Prostate gland (tissue), 2 donors: ENCODE measurements at regions of chr19 and their contacts with region 1.

Region 1: DNA sequence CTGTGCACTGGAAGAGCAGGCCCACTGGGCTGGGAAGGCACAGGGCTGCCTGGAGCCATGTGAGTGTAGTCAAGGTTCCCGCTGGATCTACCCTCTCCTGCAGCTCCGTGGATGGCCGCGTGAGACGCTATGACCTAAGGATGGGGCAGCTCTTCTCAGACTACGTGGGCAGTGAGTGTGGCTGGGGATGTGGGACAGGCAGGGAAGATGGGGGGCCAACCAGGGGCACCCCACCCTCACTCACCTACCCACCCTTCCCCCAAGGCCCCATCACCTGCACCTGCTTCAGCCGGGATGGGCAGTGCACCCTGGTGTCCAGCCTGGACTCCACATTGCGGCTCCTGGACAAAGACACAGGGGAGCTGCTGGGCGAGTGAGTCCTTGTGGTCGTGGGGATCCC is 6.1 kb downstream of the WDR83 start:
- DNase-seq: no peak
- H3K4me3 ChIP-seq: no peak overlapping the region
- H3K27ac ChIP-seq: no peak overlapping the region
- H3K4me1 ChIP-seq: peaks cover 15% of the 10 kb centered on the region
- H3K27me3 ChIP-seq: no peaks in the 10 kb centered on the region
- CTCF ChIP-seq: no peak
- POLR2A ChIP-seq: no peak

Region 2: DNA sequence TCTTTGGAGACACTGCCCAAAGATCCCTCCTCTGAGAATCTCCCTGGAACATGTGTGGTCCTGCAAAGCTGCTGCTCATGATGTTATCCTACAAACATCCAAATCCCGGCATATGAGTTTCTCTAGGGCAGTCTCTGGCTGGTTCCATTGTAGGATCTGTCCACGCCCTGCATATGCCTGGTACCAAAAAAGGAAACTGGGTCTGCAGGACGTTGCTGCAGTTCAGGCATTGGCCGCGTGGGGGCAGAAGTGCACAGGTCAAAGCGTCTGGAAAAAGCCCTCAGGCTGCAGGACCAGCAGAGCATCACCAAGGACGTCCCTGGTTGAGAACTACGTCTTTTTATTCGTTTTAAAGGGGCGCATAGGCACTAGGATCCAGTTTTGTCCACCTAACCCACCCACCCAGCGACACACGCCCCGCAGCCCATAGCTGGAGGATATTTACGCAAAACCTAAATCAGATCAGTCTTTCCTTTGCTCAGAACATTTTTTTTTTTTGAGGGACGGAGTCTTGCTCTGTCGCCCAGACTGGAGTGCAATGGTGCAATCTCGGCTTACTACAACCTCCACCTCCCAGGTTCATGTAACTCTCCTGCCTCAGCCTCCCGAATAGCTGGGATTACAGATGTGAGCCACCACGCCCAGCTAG is 108.6 kb before region 1 on chr19:
- intact Hi-C with region 1: loop called (anchors 2 kb)
- DNase-seq: peak; percentile 84
- H3K4me3 ChIP-seq: no peak overlapping the region
- H3K27ac ChIP-seq: no peak overlapping the region
- H3K4me1 ChIP-seq: no peaks in the 10 kb centered on the region
- H3K27me3 ChIP-seq: no peaks in the 10 kb centered on the region
- CTCF ChIP-seq: peak; percentile 76 to 92 (median 90)
- POLR2A ChIP-seq: no peak